Tibial artery (tissue), 4 donors: ENCODE measurements at regions of chr1 and their contacts with region 1.

Region 1: DNA sequence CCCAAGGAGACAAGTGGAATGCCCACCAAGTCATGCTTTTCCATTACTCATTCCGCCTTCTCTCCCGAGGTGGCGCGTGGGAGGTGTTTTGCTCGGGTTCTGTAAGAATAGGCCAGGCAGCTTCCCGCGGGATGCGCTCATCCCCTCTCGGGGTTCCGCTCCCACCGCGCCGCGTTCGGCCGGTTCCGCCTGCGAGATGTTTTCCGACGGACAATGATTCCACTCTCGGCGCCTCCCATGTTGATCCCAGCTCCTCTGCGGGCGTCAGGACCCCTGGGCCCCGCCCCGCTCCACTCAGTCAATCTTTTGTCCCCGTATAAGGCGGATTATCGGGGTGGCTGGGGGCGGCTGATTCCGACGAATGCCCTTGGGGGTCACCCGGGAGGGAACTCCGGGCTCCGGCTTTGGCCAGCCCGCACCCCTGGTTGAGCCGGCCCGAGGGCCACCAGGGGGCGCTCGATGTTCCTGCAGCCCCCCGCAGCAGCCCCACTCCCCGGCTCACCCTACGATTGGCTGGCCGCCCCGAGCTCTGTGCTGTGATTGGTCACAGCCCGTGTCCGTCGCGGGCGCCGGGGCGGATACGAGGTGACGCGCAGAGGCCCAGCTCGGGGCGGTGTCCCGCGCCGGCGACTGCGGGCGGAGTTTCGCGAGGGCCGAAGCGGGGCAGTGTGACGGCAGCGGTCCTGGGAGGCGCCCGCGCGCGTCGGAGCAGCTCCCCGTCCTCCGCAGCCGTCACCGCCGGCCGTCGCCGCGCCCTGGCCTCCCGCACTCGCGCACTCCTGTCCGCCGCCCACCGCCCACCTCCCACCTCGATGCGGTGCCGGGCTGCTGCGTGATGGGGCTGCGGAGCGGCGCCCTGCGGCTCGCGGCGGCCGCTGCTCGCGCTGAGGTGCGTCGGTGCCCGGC is at the start of gene KIF1B:
- DNase-seq: peak; percentile 98 to 99
- H3K4me3 ChIP-seq: peak within 1 kb of the TSS; percentile 85 to 96
- H3K27ac ChIP-seq: peak within 1 kb of the TSS; percentile 99 to 100
- H3K4me1 ChIP-seq: peaks cover 0 to 32% (median 18%) of the 10 kb centered on the region in 4 donors
- H3K27me3 ChIP-seq: no peaks in the 10 kb centered on the region
- CTCF ChIP-seq: peak; percentile 97 to 99

Region 2: GRCh38 chr1:10283318-10283984 is 73.3 kb after region 1 on chr1:
- intact Hi-C with region 1: loop called (anchors 10 kb)
- DNase-seq: no peak
- H3K4me3 ChIP-seq: no peak overlapping the region
- H3K27ac ChIP-seq: no peak overlapping the region
- H3K4me1 ChIP-seq: peaks cover 0 to 30% (median 18%) of the 10 kb centered on the region in 4 donors
- H3K27me3 ChIP-seq: no peaks in the 10 kb centered on the region
- CTCF ChIP-seq: no peak

Region 3: GRCh38 chr1:10338047-10338446 is 127.9 kb after region 1 on chr1:
- intact Hi-C with region 1: loop called (anchors 10 kb)
- DNase-seq: peak in 1 of 2 donors; percentile 25
- H3K4me3 ChIP-seq: no peak overlapping the region
- H3K27ac ChIP-seq: no peak overlapping the region
- H3K4me1 ChIP-seq: no peaks in the 10 kb centered on the region
- H3K27me3 ChIP-seq: no peaks in the 10 kb centered on the region
- CTCF ChIP-seq: peak; percentile 60 to 62

Region 4: DNA sequence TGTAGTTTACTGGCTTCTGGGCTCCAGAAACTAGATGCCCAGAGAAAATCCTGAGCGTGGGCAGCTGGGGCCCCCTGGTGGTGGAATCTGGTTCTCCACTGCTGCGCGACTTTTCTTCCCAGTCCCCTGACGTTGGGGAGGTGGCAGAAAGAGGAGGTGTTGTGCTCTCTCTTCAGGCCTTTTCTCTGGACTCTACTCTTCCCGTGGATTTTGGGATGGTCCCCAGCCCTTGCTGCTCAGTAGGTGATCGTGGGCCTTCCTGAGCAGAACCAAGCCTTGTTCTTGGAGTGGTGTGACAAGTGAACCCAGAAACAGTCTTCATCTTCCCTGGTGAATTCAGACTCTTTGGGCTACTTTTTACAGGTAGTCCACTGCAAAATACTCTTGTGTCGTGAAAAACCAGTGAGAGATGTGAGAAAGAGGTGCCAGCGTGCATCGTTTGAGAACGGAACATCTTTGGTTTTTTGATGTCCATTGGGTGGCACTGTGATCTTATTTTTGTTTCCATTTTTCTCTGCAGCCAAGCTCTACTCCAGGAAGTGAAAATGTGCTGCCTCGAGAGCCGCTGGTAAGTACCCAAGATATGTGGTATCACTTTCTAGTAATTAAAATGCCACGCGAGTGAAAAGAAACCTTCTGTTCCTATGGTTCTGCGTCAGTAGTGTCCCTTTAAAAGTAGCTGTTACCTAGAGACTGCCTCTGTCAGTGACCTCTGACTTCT is 284.8 kb after region 1 on chr1:
- intact Hi-C with region 1: no loop called
- DNase-seq: peak; percentile 40 to 75
- H3K4me3 ChIP-seq: peak overlapping the region in 1 of 2 donors; percentile 27
- H3K27ac ChIP-seq: no peak overlapping the region
- H3K4me1 ChIP-seq: peaks cover 0 to 16% (median 6%) of the 10 kb centered on the region in 4 donors
- H3K27me3 ChIP-seq: no peaks in the 10 kb centered on the region
- CTCF ChIP-seq: peak; percentile 86 to 89